ENCODE measurements at regions of chr7 and their contacts with region 1.

Region 1: GRCh38 chr7:99616359-99617191 is at the start of gene ZSCAN25:
- H3K4me3 ChIP-seq: peak within 1 kb of the TSS; percentile 93
- H3K27ac ChIP-seq: peak within 1 kb of the TSS; percentile 71
- H3K4me1 ChIP-seq: no peaks in the 10 kb centered on the region
- CTCF ChIP-seq: peak; percentile 93

Region 2: GRCh38 chr7:99551767-99552463 is 64.7 kb before region 1 on chr7 and contains the start of gene FAM200A:
- CTCF ChIA-PET with region 1: interaction called, 5 read pairs
- POLR2A ChIA-PET with region 1: interaction called, 10 read pairs
- H3K4me3 ChIP-seq: peak within 1 kb of the TSS; percentile 97
- H3K27ac ChIP-seq: peak within 1 kb of the TSS; percentile 11
- H3K4me1 ChIP-seq: no peaks in the 10 kb centered on the region
- CTCF ChIP-seq: no peak

Region 3: GRCh38 chr7:99594948-99595745 is 21.4 kb before region 1 on chr7:
- CTCF ChIA-PET with region 1: no interaction called
- POLR2A ChIA-PET with region 1: no interaction called
- H3K4me3 ChIP-seq: no peak overlapping the region
- H3K27ac ChIP-seq: no peak overlapping the region
- H3K4me1 ChIP-seq: no peaks in the 10 kb centered on the region
- CTCF ChIP-seq: no peak

Measured in HEK293 (cell line).